ENCODE measurements at regions of chr7 and their contacts with region 1.

Region 1: GRCh38 chr7:148962823-148963582 is 65.3 kb downstream of the PDIA4 start:
- DNase-seq: peak; percentile 72
- H3K4me3 Mint-ChIP-seq: peak overlapping the region; percentile 77
- H3K27ac Mint-ChIP-seq: peak overlapping the region; percentile 79
- H3K4me1 Mint-ChIP-seq: peaks cover 11% of the 10 kb centered on the region
- H3K27me3 Mint-ChIP-seq: no peaks in the 10 kb centered on the region
- CTCF ChIP-seq: peak; percentile 87

Region 2: GRCh38 chr7:148262721-148263229 is 700.2 kb before region 1 on chr7:
- CTCF ChIA-PET with region 1: interaction called, 29 read pairs
- POLR2A ChIA-PET with region 1: interaction called, 3 read pairs
- intact Hi-C with region 1: loop called (anchors 1 kb)
- DNase-seq: peak; percentile 44
- H3K4me3 Mint-ChIP-seq: peak overlapping the region; percentile 28
- H3K27ac Mint-ChIP-seq: no peak overlapping the region
- H3K4me1 Mint-ChIP-seq: peaks cover 8% of the 10 kb centered on the region
- H3K27me3 Mint-ChIP-seq: peaks cover 41% of the 10 kb centered on the region
- CTCF ChIP-seq: peak; percentile 87

Region 3: GRCh38 chr7:148503875-148504487 is 459.0 kb before region 1 on chr7:
- CTCF ChIA-PET with region 1: interaction called, 19 read pairs
- POLR2A ChIA-PET with region 1: interaction called, 3 read pairs
- intact Hi-C with region 1: loop called (anchors 1 kb)
- DNase-seq: peak; percentile 42
- H3K4me3 Mint-ChIP-seq: no peak overlapping the region
- H3K27ac Mint-ChIP-seq: no peak overlapping the region
- H3K4me1 Mint-ChIP-seq: peaks cover 4% of the 10 kb centered on the region
- H3K27me3 Mint-ChIP-seq: peaks cover 22% of the 10 kb centered on the region
- CTCF ChIP-seq: peak; percentile 56

Region 4: GRCh38 chr7:148698397-148699023 is 264.5 kb before region 1 on chr7 and contains the start of gene CUL1:
- CTCF ChIA-PET with region 1: interaction called, 6 read pairs
- POLR2A ChIA-PET with region 1: interaction called, 4 read pairs
- intact Hi-C with region 1: loop called (anchors 1 kb)
- DNase-seq: peak; percentile 83
- H3K4me3 Mint-ChIP-seq: peak within 1 kb of the TSS; percentile 85
- H3K27ac Mint-ChIP-seq: peak within 1 kb of the TSS; percentile 71
- H3K4me1 Mint-ChIP-seq: peaks cover 46% of the 10 kb centered on the region
- H3K27me3 Mint-ChIP-seq: no peaks in the 10 kb centered on the region
- CTCF ChIP-seq: no peak
- total RNA-seq, gene CUL1: 41.2 and 49.2 TPM in 2 replicates

Region 5: GRCh38 chr7:148856891-148857290 is 106.1 kb before region 1 on chr7:
- CTCF ChIA-PET with region 1: interaction called, 11 read pairs
- POLR2A ChIA-PET with region 1: interaction called, 5 read pairs
- intact Hi-C with region 1: no loop called
- DNase-seq: no peak
- H3K4me3 Mint-ChIP-seq: no peak overlapping the region
- H3K27ac Mint-ChIP-seq: no peak overlapping the region
- H3K4me1 Mint-ChIP-seq: peaks cover 13% of the 10 kb centered on the region
- H3K27me3 Mint-ChIP-seq: no peaks in the 10 kb centered on the region
- CTCF ChIP-seq: no peak

Region 6: DNA sequence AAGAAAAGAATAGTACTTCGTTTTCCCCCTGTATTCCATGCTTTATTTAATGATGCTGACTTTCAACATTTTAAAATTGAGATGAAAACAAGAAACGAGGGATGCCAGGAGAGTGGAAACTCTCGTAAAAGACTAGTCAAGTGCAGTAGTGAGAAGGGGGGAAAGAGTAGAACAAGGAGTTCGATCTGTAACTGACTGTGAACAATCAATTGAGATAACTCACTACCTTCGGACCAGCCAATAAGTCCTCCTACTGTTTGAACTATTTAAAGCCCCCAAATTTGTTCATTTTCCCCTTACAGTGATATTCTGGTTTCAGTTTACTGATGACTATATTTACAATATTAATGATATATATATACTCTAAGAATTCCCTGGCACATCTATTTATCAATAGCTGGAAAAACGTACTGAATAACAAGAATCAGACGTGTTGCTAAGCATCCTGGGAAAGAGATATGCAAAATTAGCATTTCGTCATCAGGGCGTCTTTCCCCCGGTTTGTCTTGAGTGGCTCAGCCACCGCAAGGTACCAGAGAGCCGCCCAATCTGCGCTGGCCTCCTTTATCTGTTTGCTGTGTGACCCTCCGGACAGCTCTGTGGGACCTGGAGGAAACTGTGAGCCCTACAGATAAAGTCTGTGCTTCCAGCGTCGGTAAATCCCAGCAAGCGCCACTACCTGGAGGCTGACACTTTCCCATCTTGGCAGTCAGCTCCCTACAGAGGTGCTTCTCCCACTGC is 24.2 kb after region 1 on chr7:
- CTCF ChIA-PET with region 1: interaction called, 14 read pairs
- POLR2A ChIA-PET with region 1: interaction called, 4 read pairs
- intact Hi-C with region 1: no loop called
- DNase-seq: peak; percentile 89
- H3K4me3 Mint-ChIP-seq: peak overlapping the region; percentile 92
- H3K27ac Mint-ChIP-seq: peak overlapping the region; percentile 80
- H3K4me1 Mint-ChIP-seq: peaks cover 29% of the 10 kb centered on the region
- H3K27me3 Mint-ChIP-seq: no peaks in the 10 kb centered on the region
- CTCF ChIP-seq: no peak